HepG2 (cell line): ENCODE measurements at regions of chr16 and their contacts with region 1.

Region 1: GRCh38 chr16:12340151-12340733 is 363.7 kb downstream of the SNX29 start:
- DNase-seq: peak; percentile 74
- ATAC-seq: peak; percentile 85
- H3K4me3 ChIP-seq: no peak overlapping the region
- H3K27ac ChIP-seq: no peak overlapping the region
- H3K4me1 ChIP-seq: peaks cover 9% of the 10 kb centered on the region; the same call in 1 of the 2 replicates
- H3K27me3 ChIP-seq: no peaks in the 10 kb centered on the region
- CTCF ChIP-seq: peak; percentile 93
- EP300 ChIP-seq: no peak
- POLR2A ChIP-seq: no peak
- RAD21 ChIP-seq: peak; percentile 87

Region 2: GRCh38 chr16:11727796-11728543 is 612.3 kb before region 1 on chr16:
- CTCF ChIA-PET with region 1: no interaction called
- POLR2A ChIA-PET with region 1: no interaction called
- in situ Hi-C with region 1: no loop called
- intact Hi-C with region 1: no loop called
- DNase-seq: no peak
- ATAC-seq: no peak
- H3K4me3 ChIP-seq: no peak overlapping the region
- H3K27ac ChIP-seq: no peak overlapping the region
- H3K4me1 ChIP-seq: peaks cover 47% of the 10 kb centered on the region
- H3K27me3 ChIP-seq: no peaks in the 10 kb centered on the region
- CTCF ChIP-seq: no peak
- EP300 ChIP-seq: no peak
- POLR2A ChIP-seq: no peak
- RAD21 ChIP-seq: no peak

Region 3: DNA sequence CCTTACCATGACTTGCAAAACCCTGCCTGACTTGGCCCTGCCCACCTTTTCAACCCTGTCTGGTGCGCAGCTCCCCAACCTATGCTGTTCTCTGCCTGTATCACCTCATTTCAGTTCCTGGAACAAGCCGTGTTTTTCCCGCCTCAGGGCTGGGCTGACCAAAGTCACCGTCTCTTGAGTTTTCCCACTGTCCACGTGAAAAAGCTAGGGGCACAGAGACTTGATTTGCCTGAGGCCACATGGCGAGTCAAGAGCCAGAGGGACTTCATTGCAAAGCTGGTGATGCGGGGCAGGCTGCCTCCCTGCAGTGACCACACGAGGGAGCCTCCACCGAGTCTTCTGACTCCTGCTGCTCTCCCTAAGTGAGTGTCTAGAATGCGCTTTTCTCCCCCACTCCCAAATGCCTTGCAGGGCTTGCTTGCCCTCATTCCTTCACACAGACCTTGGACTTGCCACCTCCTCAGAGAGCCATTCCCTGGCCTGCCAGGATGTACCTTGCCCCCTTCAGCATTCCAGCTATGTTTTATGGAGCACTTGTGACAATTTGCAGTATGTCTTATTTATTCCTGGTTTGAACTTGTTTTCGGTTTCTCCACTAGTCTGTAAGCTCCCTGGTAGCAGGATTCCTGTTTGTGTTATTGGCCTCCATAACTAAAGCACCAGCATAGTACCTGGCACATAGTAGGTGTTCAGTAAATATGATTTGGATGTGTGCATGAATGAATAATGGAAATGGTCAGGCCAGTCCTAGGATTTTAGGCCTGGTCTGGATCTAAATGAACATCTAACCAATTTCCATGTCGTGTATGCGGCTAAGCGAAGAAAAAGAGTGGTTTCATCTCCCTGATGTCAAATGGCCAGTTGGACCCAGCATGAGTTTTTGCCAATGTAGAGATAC is 111.4 kb before region 1 on chr16:
- CTCF ChIA-PET with region 1: interaction called, 11 read pairs
- POLR2A ChIA-PET with region 1: no interaction called
- in situ Hi-C with region 1: no loop called
- intact Hi-C with region 1: loop called (anchors 1 kb)
- DNase-seq: peak; percentile 70
- ATAC-seq: peak; percentile 93
- H3K4me3 ChIP-seq: peak overlapping the region in 2 of 3 experiments; percentile 1 to 44; a peak in 2 of 6 replicates
- H3K27ac ChIP-seq: no peak overlapping the region
- H3K4me1 ChIP-seq: peaks cover 56% of the 10 kb centered on the region
- H3K27me3 ChIP-seq: no peaks in the 10 kb centered on the region
- CTCF ChIP-seq: peak; percentile 98
- EP300 ChIP-seq: no peak
- POLR2A ChIP-seq: no peak
- RAD21 ChIP-seq: peak; percentile 94

Region 4: GRCh38 chr16:12257926-12258561 is 82.2 kb before region 1 on chr16:
- CTCF ChIA-PET with region 1: no interaction called
- POLR2A ChIA-PET with region 1: no interaction called
- in situ Hi-C with region 1: no loop called
- intact Hi-C with region 1: loop called (anchors 1 kb)
- DNase-seq: peak; percentile 95
- ATAC-seq: peak; percentile 86
- H3K4me3 ChIP-seq: 0 out of 6 replicates have a peak overlapping the region, but pooled peaks of 2 of the 3 experiments have one; percentile 4 to 10
- H3K27ac ChIP-seq: no peak overlapping the region
- H3K4me1 ChIP-seq: peaks cover 66% of the 10 kb centered on the region
- H3K27me3 ChIP-seq: no peaks in the 10 kb centered on the region
- CTCF ChIP-seq: peak; percentile 100
- EP300 ChIP-seq: peak in 1 of 2 experiments; percentile 68; a peak in 3 of 4 replicates
- POLR2A ChIP-seq: no peak
- RAD21 ChIP-seq: peak; percentile 99

Region 5: GRCh38 chr16:12455287-12455798 is 115.1 kb after region 1 on chr16:
- CTCF ChIA-PET with region 1: interaction called, 3 read pairs
- POLR2A ChIA-PET with region 1: no interaction called
- in situ Hi-C with region 1: no loop called
- intact Hi-C with region 1: loop called (anchors 5 kb)
- DNase-seq: peak; percentile 53
- ATAC-seq: peak; percentile 95
- H3K4me3 ChIP-seq: no peak overlapping the region
- H3K27ac ChIP-seq: no peak overlapping the region
- H3K4me1 ChIP-seq: peaks cover 20% of the 10 kb centered on the region
- H3K27me3 ChIP-seq: no peaks in the 10 kb centered on the region
- CTCF ChIP-seq: peak; percentile 99
- EP300 ChIP-seq: no peak
- POLR2A ChIP-seq: no peak
- RAD21 ChIP-seq: peak; percentile 98

Region 6: DNA sequence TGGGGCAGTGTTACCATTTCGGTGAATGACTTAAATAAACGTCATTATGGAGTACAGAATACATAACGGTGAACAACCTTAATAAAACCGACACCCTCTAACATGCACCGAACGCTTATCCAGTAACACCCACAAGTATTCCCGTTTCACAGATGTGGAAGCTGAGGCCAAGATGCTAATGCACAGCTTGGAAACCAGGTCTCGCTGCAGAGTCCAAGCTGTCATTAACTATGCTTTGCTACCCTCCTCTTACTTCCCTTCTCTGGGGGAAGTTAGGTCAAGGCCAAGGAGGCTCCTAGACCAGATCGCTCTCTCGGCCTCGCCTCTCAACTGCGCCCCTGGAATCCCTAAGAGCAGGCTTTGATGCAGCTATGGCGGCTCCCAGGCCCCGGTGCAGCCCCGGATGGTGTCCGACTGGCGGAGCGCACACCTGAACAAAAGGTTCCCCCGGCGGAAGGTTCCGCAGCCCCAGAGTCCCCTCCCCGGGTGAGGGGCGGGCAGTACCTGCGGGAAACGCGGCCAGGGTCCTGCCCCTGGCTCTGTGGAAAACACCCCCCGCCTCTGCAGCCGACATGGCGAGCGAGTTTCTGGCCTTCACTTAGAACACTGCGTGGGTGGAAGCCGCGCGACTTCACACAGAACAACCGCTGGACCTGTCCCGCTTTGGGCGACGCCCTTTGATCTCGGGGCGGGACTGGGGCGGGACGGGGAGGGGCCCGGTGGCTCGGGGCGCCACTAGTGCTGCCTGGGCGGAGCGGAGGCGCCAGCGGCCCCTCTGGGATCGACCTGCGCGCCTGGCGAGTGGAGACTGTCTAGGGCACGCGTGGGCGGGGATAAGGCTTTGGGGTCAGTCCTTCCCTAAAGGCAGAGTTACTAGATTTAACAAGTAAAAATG is 463.2 kb after region 1 on chr16 and contains the start of gene CPPED1:
- CTCF ChIA-PET with region 1: no interaction called
- POLR2A ChIA-PET with region 1: no interaction called
- in situ Hi-C with region 1: loop called (anchors 25 kb)
- intact Hi-C with region 1: no loop called
- DNase-seq: peak; percentile 93
- ATAC-seq: peak; percentile 92
- H3K4me3 ChIP-seq: peak within 1 kb of the TSS; percentile 86 to 97 (median 87)
- H3K27ac ChIP-seq: peak within 1 kb of the TSS; percentile 97
- H3K4me1 ChIP-seq: peaks cover 58% of the 10 kb centered on the region
- H3K27me3 ChIP-seq: peaks cover 0 to 7% of the 10 kb centered on the region in 2 experiments; a peak in 1 of 5 replicates
- CTCF ChIP-seq: peak; percentile 45
- EP300 ChIP-seq: peak in 1 of 2 experiments; percentile 89
- POLR2A ChIP-seq: peak; percentile 94 to 97
- RAD21 ChIP-seq: peak; percentile 78
- total RNA-seq, gene CPPED1: 66.6 and 118 TPM in 2 replicates

Region 7: DNA sequence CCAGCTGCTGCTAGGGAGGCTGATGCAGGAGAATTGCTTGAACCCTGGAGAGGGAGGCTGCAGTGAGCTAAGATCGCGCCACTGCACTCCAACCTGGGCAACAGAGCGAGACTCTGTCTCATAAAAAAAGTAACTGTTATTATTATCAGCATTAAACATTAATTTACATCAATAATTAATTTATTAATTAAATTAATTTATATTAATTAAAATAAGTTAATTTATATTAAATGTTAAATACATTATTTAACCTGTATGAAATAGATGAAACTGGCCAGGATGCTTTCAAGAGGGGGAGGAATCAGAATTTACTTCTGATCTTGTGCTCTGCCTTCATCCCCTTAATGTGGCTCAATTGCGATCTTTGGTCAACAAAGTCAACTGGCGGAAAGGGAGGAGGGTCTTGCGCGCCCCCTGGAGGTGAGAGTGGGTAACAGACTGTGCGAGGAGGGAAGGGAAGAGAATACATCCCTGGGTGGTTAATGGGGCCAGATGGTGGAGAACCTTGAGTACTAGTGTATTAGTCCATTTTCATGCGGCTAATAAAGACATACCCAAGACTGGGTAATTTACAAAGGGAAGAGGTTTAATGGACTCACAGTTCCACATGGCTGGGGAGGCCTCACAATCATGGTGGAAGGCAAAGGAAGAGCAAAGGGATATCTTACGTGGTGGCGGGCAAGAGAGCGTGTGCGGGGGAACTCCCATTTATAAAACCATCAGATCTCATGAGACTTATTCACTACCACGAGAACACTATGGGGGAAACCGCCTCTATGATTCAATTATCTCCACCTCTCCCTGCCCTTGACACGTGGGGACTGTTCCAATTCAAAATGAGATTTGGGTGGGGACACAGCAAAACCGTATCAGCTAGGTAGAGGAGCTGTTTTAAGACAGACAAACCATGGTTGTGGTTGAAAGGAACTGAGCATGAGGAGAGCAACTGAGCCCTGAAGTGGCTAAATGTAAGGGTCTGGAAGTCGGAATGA is 479.2 kb after region 1 on chr16:
- CTCF ChIA-PET with region 1: interaction called, 8 read pairs
- POLR2A ChIA-PET with region 1: no interaction called
- in situ Hi-C with region 1: loop called (anchors 25 kb)
- intact Hi-C with region 1: loop called (anchors 2 kb)
- DNase-seq: peak; percentile 79
- ATAC-seq: peak; percentile 77
- H3K4me3 ChIP-seq: no peak overlapping the region
- H3K27ac ChIP-seq: no peak overlapping the region
- H3K4me1 ChIP-seq: peaks cover 34% of the 10 kb centered on the region
- H3K27me3 ChIP-seq: 0 out of 5 replicates have a peak, but pooled peaks cover 0 to 13% of the 10 kb centered on the region in 2 experiments
- CTCF ChIP-seq: peak; percentile 97
- EP300 ChIP-seq: no peak
- POLR2A ChIP-seq: no peak
- RAD21 ChIP-seq: peak; percentile 90

Region 8: GRCh38 chr16:12874186-12874585 is 533.9 kb after region 1 on chr16:
- CTCF ChIA-PET with region 1: no interaction called
- POLR2A ChIA-PET with region 1: no interaction called
- in situ Hi-C with region 1: no loop called
- intact Hi-C with region 1: no loop called
- DNase-seq: no peak
- ATAC-seq: no peak
- H3K4me3 ChIP-seq: no peak overlapping the region
- H3K27ac ChIP-seq: no peak overlapping the region
- H3K4me1 ChIP-seq: no peaks in the 10 kb centered on the region
- H3K27me3 ChIP-seq: peaks cover 0 to 7% of the 10 kb centered on the region in 2 experiments; a peak in 1 of 5 replicates
- CTCF ChIP-seq: no peak
- EP300 ChIP-seq: no peak
- POLR2A ChIP-seq: no peak
- RAD21 ChIP-seq: no peak

Region 9: DNA sequence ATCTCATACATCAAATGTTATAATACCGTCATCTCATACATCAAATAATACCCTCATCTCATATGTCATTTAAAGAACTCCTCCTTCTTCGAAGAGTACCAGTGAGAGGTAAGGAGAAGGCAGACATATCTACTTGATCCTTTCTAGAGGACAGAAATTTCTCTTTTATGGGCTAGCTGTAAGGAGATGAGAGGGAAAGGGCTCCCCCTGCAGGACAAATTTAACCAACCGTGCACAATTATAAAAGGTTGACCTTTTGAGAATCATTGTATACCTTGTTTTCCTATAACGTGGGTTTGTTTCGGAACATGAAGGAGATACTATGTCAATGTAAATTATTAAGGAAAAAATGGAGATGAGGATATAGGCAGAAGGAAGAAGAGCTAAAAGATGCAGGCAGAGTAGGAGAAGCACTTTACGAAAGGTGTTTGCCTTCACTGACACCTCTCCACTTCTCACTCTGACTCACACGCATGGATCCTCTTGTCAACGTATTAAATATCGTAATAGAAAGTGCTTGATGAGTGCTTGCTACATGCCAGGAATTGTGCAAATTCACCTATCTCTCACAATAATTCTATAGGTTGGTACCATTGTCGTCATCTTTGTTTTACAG is 1113.8 kb after region 1 on chr16:
- CTCF ChIA-PET with region 1: interaction called, 5 read pairs
- POLR2A ChIA-PET with region 1: no interaction called
- in situ Hi-C with region 1: no loop called
- intact Hi-C with region 1: loop called (anchors 2 kb)
- DNase-seq: peak; percentile 38
- ATAC-seq: peak; percentile 65
- H3K4me3 ChIP-seq: no peak overlapping the region
- H3K27ac ChIP-seq: no peak overlapping the region
- H3K4me1 ChIP-seq: no peaks in the 10 kb centered on the region
- H3K27me3 ChIP-seq: no peaks in the 10 kb centered on the region
- CTCF ChIP-seq: peak; percentile 83
- EP300 ChIP-seq: no peak
- POLR2A ChIP-seq: no peak
- RAD21 ChIP-seq: no peak; the same call in 1 of the 2 replicates